Mammary epithelial cell (primary cell): ENCODE measurements at regions of chr2 and their contacts with region 1.

Region 1: DNA sequence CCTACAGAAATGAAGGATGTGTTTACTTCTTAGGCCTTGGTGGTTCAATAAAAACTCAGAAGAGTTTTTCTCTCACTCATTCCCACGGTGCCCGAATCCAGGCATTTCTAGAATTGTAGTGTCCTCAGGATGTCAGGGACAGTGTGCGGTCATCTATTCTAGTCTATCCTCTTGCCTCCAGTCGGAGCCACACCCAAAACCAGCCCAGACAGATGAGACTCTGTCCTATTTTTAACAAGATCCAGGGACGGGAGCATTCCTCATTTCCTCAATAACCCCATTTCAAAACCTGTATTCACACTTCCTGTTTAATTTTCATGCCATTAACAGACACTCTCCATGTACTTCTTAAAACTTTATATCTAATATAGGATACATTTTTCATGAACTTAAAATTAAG is 11.6 kb upstream of the RBMS1 start:
- DNase-seq: no peak
- H3K4me3 ChIP-seq: no peak overlapping the region
- H3K27ac ChIP-seq: no peak overlapping the region
- H3K4me1 ChIP-seq: no peaks in the 10 kb centered on the region
- H3K27me3 ChIP-seq: no peaks in the 10 kb centered on the region
- CTCF ChIP-seq: no peak

Region 2: GRCh38 chr2:160379427-160379826 is 125.8 kb before region 1 on chr2:
- CTCF ChIA-PET with region 1: no interaction called
- dilution Hi-C with region 1: no loop called
- in situ Hi-C with region 1: no loop called
- intact Hi-C with region 1: no loop called
- DNase-seq: peak; percentile 40
- H3K4me3 ChIP-seq: no peak overlapping the region
- H3K27ac ChIP-seq: no peak overlapping the region
- H3K4me1 ChIP-seq: peaks cover 35% of the 10 kb centered on the region
- H3K27me3 ChIP-seq: no peaks in the 10 kb centered on the region
- CTCF ChIP-seq: no peak

Region 3: GRCh38 chr2:160551259-160551658 is 46.0 kb after region 1 on chr2:
- CTCF ChIA-PET with region 1: no interaction called
- dilution Hi-C with region 1: loop called (anchors 5 kb)
- in situ Hi-C with region 1: no loop called
- intact Hi-C with region 1: no loop called
- DNase-seq: no peak
- H3K4me3 ChIP-seq: no peak overlapping the region
- H3K27ac ChIP-seq: no peak overlapping the region
- H3K4me1 ChIP-seq: no peaks in the 10 kb centered on the region
- H3K27me3 ChIP-seq: no peaks in the 10 kb centered on the region
- CTCF ChIP-seq: no peak

Region 4: GRCh38 chr2:160794926-160795325 is 289.7 kb after region 1 on chr2:
- CTCF ChIA-PET with region 1: no interaction called
- dilution Hi-C with region 1: no loop called
- in situ Hi-C with region 1: no loop called
- intact Hi-C with region 1: no loop called
- DNase-seq: no peak
- H3K4me3 ChIP-seq: no peak overlapping the region
- H3K27ac ChIP-seq: no peak overlapping the region
- H3K4me1 ChIP-seq: no peaks in the 10 kb centered on the region
- H3K27me3 ChIP-seq: no peaks in the 10 kb centered on the region
- CTCF ChIP-seq: no peak